Activated naive CD4-positive, alpha-beta T cell treated with anti-CD3 and anti-CD28 coated beads, Interleukin-2, amount 10 ng/mL, durations not matched to agents 7 days and 5 days (primary cell): ENCODE measurements at regions of chr2 and their contacts with region 1.

Region 1: GRCh38 chr2:157327621-157328500 is 2.2 kb upstream of the ERMN start:
- DNase-seq: peak; percentile 92
- H3K4me3 Mint-ChIP-seq: peak overlapping the region; percentile 45
- H3K27ac Mint-ChIP-seq: peak overlapping the region; percentile 40
- H3K4me1 Mint-ChIP-seq: peaks cover 55% of the 10 kb centered on the region
- H3K27me3 Mint-ChIP-seq: no peaks in the 10 kb centered on the region

Region 2: DNA sequence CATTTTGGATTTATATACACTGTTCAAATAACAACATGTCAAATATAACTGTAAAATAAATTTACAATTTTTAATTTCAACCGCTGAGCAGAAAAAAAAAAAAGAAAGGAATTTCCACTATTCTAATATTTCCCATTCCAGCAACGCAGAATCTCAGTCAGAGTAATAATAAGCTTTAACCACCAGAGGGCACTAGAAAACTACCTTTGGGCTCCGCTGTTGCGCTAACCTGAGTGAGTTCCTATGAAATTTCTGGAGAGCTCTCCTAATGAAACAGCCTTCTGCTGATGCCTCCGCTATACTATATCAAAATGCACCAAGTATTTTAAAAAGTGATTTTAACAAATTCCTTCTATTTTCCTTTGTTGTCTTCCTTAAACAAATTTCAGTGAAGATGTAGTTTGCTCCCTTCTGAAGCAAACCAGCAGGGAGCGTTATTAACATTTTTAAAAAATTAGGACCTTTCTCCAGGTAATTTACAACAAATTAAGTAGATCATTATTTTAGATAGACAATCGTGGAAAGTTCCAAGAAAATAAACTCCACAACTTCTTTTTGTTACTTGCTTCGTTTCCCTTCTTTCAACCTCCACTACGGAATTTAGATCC is 25.3 kb before region 1 on chr2:
- CTCF ChIA-PET with region 1: interaction called, 112 read pairs
- DNase-seq: peak; percentile 45
- H3K4me3 Mint-ChIP-seq: no peak overlapping the region
- H3K27ac Mint-ChIP-seq: no peak overlapping the region
- H3K4me1 Mint-ChIP-seq: peaks cover 20% of the 10 kb centered on the region
- H3K27me3 Mint-ChIP-seq: peaks cover 13% of the 10 kb centered on the region

Region 3: GRCh38 chr2:157404363-157404762 is 76.5 kb after region 1 on chr2:
- CTCF ChIA-PET with region 1: interaction called, 45 read pairs
- DNase-seq: peak; percentile 79
- H3K4me3 Mint-ChIP-seq: peak overlapping the region; percentile 65
- H3K27ac Mint-ChIP-seq: peak overlapping the region; percentile 99
- H3K4me1 Mint-ChIP-seq: peaks cover 75% of the 10 kb centered on the region
- H3K27me3 Mint-ChIP-seq: no peaks in the 10 kb centered on the region

Region 4: GRCh38 chr2:157420771-157421323 is 93.0 kb after region 1 on chr2:
- CTCF ChIA-PET with region 1: interaction called, 45 read pairs
- DNase-seq: no peak
- H3K4me3 Mint-ChIP-seq: peak overlapping the region; percentile 42
- H3K27ac Mint-ChIP-seq: peak overlapping the region; percentile 91
- H3K4me1 Mint-ChIP-seq: peaks cover 79% of the 10 kb centered on the region
- H3K27me3 Mint-ChIP-seq: peaks cover 1% of the 10 kb centered on the region

Region 5: GRCh38 chr2:157492189-157492773 is 164.4 kb after region 1 on chr2:
- CTCF ChIA-PET with region 1: interaction called, 41 read pairs
- DNase-seq: peak; percentile 83
- H3K4me3 Mint-ChIP-seq: no peak overlapping the region
- H3K27ac Mint-ChIP-seq: no peak overlapping the region
- H3K4me1 Mint-ChIP-seq: peaks cover 62% of the 10 kb centered on the region
- H3K27me3 Mint-ChIP-seq: no peaks in the 10 kb centered on the region

Region 6: DNA sequence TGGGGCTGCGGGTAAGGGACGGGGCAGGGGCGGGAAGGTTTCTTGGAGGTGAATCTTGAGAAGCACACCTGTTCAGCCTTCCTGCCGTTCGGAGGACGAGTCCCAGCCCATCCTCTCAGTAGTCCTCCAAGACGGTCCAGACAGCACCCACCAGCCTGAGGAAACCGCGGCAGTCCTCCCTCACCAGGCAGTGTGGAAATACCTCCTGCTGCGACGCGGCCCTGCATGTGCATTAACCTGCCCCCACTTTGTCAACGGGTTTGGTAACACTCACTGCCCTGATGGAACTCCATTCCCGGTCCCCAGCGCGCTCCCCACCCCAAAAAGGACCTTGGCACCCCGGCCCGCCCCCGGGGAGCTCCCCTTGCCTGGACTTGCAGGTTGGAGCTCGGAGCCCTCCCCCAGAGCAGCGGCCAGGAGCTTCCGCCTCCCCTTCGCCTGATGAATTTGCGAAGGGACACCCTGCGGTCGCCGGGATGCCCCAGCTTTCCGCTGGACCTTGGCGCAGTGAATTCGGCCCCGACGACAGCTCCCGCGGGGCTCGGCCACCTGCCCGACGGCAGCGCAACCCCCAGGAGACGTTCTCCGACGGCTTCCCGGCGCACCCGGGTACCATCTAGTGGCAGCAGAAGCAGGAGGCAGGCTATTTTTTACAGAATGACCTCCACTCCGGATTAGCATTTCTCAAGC is 269.3 kb after region 1 on chr2:
- CTCF ChIA-PET with region 1: interaction called, 18 read pairs
- DNase-seq: peak; percentile 69
- H3K4me3 Mint-ChIP-seq: peak overlapping the region; percentile 54
- H3K27ac Mint-ChIP-seq: no peak overlapping the region
- H3K4me1 Mint-ChIP-seq: peaks cover 11% of the 10 kb centered on the region
- H3K27me3 Mint-ChIP-seq: peaks cover 11% of the 10 kb centered on the region

Region 7: DNA sequence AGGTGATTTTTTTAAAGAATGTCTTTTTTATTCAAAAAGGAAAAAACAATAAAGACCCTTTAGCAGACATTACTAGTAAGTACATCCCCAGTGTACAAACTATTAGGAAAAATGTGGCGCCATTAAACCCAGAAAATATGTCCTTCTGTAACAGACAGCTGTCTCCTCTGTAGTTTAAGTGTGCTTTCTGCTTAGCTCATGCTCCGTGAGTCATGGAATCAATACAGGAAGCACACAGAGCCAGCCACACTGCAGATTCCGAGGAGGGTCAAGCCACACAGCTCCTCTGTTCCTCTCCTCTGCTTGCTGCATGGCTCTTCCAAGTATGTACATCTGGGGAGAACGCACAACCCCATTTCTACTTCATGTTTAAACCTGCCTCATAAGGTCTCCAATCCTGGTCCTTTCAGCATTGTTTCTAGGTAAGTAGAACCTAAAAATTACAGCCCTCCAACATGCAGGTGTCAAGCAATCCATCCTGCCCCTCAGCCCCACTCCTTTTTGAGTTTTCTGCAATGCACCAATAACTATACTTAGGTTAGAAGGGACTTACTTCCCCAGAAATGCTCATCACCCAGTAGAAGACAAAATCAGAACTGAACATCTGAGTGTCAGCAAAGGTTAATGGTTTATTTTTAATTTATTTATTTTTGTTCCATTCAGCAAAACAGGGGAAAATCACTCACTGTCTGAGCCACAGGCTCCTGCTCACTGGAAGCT is 510.7 kb after region 1 on chr2:
- CTCF ChIA-PET with region 1: no interaction called
- DNase-seq: peak; percentile 43
- H3K4me3 Mint-ChIP-seq: no peak overlapping the region
- H3K27ac Mint-ChIP-seq: peak overlapping the region; percentile 73
- H3K4me1 Mint-ChIP-seq: peaks cover 40% of the 10 kb centered on the region
- H3K27me3 Mint-ChIP-seq: no peaks in the 10 kb centered on the region